ENCODE measurements at regions of chr7 and their contacts with region 1.

Region 1: DNA sequence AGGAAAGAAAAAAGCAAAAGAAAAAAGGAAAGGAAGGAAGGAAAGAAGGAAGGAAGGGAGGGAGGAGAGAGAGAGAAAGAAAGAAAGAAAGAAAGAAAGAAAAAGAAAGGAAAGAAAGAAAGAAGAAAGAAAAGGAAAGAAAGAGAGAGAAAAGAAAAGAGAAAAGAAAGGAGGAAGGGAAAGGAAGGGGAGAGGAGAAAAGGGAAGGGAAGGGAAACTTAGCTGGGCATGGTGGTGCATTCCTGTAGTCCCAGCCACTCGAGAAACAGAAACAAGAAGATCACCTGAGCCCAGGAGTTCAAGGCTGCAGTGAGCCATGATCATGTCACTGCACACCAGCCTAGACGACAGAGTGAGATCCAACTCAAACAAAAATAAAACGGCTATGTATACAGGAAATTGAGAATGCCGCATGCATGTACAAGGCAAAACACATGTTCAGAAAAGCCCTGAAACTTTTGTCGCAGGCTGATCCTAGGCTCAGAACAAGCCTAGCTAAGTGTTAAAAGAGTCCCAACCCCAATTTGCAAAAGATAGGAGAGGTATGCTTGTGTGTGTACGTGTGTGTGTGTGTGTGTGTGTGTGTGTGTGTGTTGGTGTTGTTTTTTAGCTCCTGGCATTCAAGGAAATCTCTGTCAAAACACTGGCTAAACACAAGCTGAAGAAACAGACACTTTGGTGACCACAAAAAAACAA is 6.6 kb upstream of the NPC1L1 start:
- DNase-seq: no peak
- H3K4me3 Mint-ChIP-seq: no peak overlapping the region
- H3K27ac Mint-ChIP-seq: no peak overlapping the region
- H3K4me1 Mint-ChIP-seq: peaks cover 4% of the 10 kb centered on the region
- H3K27me3 Mint-ChIP-seq: no peaks in the 10 kb centered on the region

Region 2: GRCh38 chr7:44177570-44178131 is 370.0 kb before region 1 on chr7:
- CTCF ChIA-PET with region 1: no interaction called
- intact Hi-C with region 1: no loop called
- DNase-seq: no peak
- H3K4me3 Mint-ChIP-seq: no peak overlapping the region
- H3K27ac Mint-ChIP-seq: no peak overlapping the region
- H3K4me1 Mint-ChIP-seq: no peaks in the 10 kb centered on the region
- H3K27me3 Mint-ChIP-seq: peaks cover 2% of the 10 kb centered on the region

Region 3: GRCh38 chr7:44498230-44498954 is 49.3 kb before region 1 on chr7:
- CTCF ChIA-PET with region 1: no interaction called
- intact Hi-C with region 1: no loop called
- DNase-seq: no peak
- H3K4me3 Mint-ChIP-seq: no peak overlapping the region
- H3K27ac Mint-ChIP-seq: no peak overlapping the region
- H3K4me1 Mint-ChIP-seq: no peaks in the 10 kb centered on the region
- H3K27me3 Mint-ChIP-seq: no peaks in the 10 kb centered on the region

Region 4: GRCh38 chr7:44508328-44509030 is 39.2 kb before region 1 on chr7:
- CTCF ChIA-PET with region 1: no interaction called
- intact Hi-C with region 1: loop called (anchors 5 kb)
- DNase-seq: peak; percentile 44
- H3K4me3 Mint-ChIP-seq: no peak overlapping the region
- H3K27ac Mint-ChIP-seq: peak overlapping the region; percentile 0
- H3K4me1 Mint-ChIP-seq: peaks cover 16% of the 10 kb centered on the region
- H3K27me3 Mint-ChIP-seq: peaks cover 5% of the 10 kb centered on the region

Measured in activated naive CD4-positive, alpha-beta T cell treated with anti-CD3 and anti-CD28 coated beads for 36 hours (primary cell).